ENCODE measurements at regions of chr11 and their contacts with region 1.

Region 1: DNA sequence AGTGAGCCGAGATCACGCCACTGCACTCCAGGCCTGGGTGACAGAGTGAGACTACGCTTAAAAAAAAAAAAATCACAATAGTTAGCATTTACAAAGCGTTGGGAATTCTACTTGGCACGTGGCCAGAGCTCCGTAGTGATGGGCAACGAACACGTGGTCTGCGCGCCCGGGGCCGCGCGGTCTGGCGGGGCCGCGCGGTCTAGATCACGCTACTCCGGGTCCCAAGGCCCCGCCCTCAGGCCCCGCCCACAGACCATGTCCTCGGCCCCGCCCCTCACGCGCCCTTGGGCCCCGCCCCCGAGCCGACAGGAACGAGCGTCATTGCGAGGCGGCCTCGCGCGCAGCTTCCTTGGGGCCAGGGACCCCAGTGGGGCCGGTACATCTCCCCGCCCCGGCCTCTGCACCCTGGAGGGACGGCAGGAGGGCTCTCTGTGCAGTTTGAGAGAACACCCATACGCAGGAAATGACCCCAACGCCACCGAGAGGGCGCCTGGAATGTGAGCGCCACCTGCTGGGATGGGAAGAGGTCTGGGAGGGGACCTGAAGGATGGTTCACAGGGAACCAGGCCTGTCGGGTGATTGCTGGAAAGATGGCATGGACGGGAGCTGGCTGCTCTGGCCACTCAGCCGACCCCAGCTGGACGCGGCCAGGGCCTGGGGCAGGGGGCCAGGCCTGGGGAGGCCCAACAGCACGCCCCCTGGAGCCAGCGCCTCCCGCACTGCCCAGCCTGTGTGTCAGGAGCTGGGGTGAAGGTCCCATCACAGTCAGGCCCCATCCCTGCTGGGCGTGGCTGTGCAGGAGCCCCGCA is 2.0 kb upstream of the PTDSS2 start:
- DNase-seq: peak; percentile 98
- H3K4me3 ChIP-seq: peak overlapping the region; percentile 63 to 77
- H3K27ac ChIP-seq: peak overlapping the region; percentile 81 to 89
- H3K4me1 ChIP-seq: peaks cover 6 to 24% of the 10 kb centered on the region in 2 experiments; a peak in 2 of 4 replicates
- H3K27me3 ChIP-seq: no peaks in the 10 kb centered on the region
- CTCF ChIP-seq: peak; percentile 93
- EP300 ChIP-seq: no peak
- RAD21 ChIP-seq: peak; percentile 78

Region 2: DNA sequence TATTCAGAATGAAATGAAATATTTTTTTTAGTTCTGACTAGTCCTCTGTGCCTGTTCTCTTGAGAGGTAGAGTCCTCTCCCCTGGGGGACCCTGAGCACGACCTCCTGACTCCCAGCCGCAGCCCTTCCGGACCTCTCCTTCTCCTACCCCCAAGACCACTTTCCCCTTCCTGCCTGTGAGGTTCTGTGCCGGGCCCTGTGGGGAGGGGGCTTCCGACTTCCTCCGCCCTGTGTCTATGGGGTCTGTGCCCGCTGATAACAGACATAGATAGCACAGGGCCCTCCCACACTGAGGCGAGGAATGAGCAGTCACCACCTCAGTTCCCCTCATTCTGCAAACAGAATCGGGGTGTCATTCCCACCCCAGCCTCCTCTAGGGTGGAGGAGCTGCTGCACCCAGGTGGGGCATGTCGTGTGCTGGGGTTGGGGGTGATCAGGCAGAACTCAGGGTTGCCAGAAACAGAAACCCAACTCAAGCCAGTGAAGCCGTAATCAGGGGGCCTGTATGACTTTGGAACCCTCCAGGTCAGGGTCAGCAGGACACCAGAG is 66.0 kb before region 1 on chr11:
- CTCF ChIA-PET with region 1: interaction called, 11 read pairs
- POLR2A ChIA-PET with region 1: no interaction called
- DNase-seq: no peak
- H3K4me3 ChIP-seq: no peak overlapping the region
- H3K27ac ChIP-seq: no peak overlapping the region
- H3K4me1 ChIP-seq: peaks cover 0 to 4% of the 10 kb centered on the region in 2 experiments; a peak in 1 of 4 replicates
- H3K27me3 ChIP-seq: no peaks in the 10 kb centered on the region
- CTCF ChIP-seq: no peak
- EP300 ChIP-seq: no peak
- RAD21 ChIP-seq: no peak

Region 3: DNA sequence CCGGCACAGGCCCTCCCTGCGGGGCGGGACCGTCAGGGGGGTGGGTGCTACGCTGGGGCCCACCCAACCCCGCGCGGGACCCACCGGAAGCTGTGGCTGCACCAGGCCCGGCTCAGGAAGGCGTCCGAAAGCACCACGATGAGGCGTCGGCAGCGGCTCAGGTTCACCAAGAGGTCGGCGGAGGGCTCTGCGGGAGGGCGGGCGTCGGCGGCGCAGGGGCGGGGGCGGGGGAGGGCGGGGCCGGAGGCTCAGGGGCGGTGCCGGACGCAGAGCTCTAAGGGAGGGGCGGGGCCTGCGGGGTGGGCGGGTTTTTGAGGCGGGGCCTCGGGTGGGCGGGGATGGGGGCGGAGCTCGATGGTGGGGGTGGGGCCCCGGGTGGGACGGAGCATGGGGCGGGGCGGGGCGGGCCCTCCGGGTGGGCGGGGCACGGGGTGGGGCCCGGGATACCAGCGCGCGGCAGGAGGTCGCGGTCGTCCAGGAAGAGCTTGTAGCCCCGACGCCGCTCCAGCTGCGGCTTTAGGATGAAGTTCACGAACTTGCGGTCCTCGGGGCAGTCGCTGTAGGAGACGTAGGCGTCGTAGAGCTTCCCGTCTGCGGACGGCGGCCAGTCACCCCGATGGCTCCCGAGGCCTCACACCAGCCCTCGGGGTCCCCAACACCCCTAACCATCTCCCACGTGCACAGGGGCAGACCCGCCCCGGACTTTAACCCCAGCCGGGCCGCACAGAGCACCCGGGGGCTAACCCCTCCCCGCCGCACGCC is 41.0 kb before region 1 on chr11:
- CTCF ChIA-PET with region 1: interaction called, 77 read pairs
- POLR2A ChIA-PET with region 1: interaction called, 8 read pairs
- DNase-seq: peak; percentile 99
- H3K4me3 ChIP-seq: peak overlapping the region; percentile 64 to 72
- H3K27ac ChIP-seq: peak overlapping the region in 1 of 2 experiments; percentile 77; a peak in 2 of 4 replicates
- H3K4me1 ChIP-seq: peaks cover 0 to 19% of the 10 kb centered on the region in 2 experiments; a peak in 1 of 4 replicates
- H3K27me3 ChIP-seq: no peaks in the 10 kb centered on the region
- CTCF ChIP-seq: no peak
- EP300 ChIP-seq: no peak
- RAD21 ChIP-seq: no peak

Region 4: DNA sequence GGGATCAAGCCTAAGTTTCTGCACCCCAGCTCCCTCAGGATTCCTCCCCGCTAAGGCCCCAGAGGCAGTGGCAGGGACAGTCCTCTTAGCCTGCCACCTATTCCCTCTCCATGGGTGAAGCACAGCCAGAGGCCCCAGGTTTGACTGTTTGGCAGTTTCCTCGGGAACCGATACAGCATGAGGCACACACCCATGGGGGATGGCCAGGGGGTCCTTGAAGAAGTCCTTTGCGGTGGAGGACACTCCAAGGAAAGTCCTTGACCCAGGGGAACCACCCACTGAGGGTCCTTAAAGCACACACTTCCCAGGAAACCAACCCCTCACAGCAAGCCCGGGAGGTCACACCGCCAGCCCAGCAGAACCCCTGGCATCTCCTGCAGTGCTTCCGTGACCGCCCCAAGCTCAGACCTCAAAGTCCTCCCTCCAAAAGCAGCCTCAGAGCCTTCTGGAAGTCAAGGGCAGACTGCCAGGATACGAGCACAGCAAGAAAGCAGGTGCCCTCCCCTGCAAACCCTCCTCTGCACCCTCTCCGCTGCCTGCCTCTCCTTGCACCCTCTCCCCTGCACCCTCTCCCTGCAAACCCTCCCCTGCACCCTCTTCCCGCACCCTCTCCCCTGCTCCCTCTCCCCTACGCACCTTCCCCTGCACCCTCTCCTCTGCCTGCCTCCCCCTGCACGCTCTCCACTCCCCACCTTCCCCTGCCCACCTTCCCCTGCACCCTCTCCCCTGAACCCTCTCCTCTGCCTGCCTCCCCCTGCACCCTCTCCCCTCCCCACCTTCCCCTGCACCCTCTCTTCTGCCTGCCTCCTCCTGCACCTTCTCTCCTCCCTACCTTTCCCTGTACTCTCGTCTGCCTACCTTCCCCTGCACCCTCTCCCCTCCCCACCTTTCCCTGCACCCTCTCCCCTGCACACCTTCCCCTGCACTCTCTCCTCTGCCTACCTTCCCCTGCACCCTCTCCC is 34.7 kb before region 1 on chr11:
- CTCF ChIA-PET with region 1: interaction called, 77 read pairs
- POLR2A ChIA-PET with region 1: interaction called, 3 read pairs
- DNase-seq: no peak
- H3K4me3 ChIP-seq: no peak overlapping the region
- H3K27ac ChIP-seq: no peak overlapping the region
- H3K4me1 ChIP-seq: peaks cover 0 to 15% of the 10 kb centered on the region in 2 experiments; a peak in 1 of 4 replicates
- H3K27me3 ChIP-seq: peaks cover 30% of the 10 kb centered on the region
- CTCF ChIP-seq: no peak
- EP300 ChIP-seq: no peak
- RAD21 ChIP-seq: no peak